ENCODE measurements at regions of chr3 and their contacts with region 1.

Region 1: DNA sequence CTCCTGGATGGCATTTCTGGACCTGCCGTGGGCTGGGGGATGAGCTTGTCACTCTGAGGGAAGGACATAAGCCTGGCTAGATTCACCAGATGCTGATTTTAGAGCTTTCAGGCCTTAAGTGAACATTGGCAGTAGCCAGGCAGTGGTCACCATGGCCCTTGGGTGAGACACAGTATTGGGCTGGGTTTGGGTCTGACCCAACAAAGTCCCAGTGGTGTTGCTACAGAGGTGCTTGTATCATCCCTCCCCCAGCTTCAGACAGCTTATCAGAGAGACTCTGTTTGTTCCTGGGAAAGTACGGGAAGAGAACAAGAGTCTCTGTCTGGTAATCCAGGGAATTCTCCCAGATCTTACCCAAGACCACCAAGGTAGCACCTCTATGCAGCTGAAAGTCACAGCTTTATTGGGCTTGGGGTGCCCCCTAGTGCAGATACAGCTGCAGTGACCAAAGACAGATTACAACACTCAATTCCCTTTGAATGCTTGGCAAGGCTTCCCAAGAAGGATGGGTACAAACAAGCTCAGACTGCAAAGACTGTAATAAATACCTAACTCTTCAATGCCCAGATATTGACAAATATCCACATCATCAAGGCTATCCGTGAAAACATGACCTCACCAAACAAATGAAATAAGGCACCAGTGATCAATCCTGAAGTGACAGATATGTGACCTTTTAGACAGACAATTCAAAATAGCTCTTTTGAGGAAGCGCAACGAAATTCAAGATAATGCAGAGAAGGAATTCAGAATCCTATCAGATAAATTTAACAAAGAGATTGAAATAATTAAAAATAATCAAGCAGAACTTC is 9.9 kb upstream of the RUVBL1 start:
- DNase-seq: no peak
- ATAC-seq: peak; percentile 52

Region 2: GRCh38 chr3:128095222-128095703 is 38.2 kb before region 1 on chr3:
- intact Hi-C with region 1: loop called (anchors 1 kb)
- DNase-seq: peak; percentile 85
- ATAC-seq: peak; percentile 95